Caki2 (cell line): ENCODE measurements at regions of chr10 and their contacts with region 1.

Region 1: GRCh38 chr10:95246579-95247051 is 44.2 kb downstream of the PDLIM1 start:
- DNase-seq: peak; percentile 63

Region 2: GRCh38 chr10:95374597-95375209 is 128.1 kb after region 1 on chr10:
- in situ Hi-C with region 1: loop called (anchors 25 kb)
- DNase-seq: peak; percentile 63

Region 3: DNA sequence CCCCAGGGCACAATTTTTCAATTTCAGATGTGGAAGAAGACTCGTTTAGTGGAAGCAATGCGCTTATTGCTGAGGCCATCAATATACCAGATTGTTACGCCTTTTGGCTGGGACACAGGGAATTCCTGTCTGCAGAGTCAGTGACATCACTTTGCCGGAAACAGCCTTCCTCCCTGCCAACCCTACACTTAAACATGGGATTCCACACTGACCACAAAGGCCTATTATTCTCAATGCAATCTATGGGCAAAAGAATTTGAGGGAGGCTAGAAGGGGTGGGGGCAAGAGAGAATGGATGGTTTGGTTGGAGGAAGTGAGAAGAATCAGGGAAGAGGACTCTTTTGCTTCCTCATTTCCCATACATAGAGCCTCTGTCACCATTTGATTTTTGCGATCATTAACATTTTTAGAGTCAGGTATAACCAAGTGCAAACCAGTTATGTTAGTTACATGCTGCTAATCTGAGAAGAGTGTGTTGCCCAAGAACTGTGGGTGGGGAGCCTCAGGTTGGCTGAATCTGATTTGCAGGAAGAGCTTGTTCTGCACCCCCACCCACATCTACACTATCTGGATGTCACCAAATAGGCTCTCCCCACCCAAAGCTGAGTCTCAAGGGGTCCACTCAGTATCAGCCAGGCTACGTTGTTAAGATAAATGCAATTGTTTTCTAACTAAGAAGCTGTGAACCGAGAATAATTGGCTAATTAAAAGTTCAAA is 567.6 kb after region 1 on chr10:
- in situ Hi-C with region 1: no loop called
- DNase-seq: no peak